PC-9 (cell line): ENCODE measurements at regions of chr1 and their contacts with region 1.

Region 1: GRCh38 chr1:204711947-204712701 is 26.6 kb upstream of the LRRN2 start:
- DNase-seq: no peak
- H3K4me3 ChIP-seq: no peak overlapping the region
- H3K27ac ChIP-seq: no peak overlapping the region
- H3K4me1 ChIP-seq: peaks cover 9% of the 10 kb centered on the region
- H3K27me3 ChIP-seq: peaks cover 5% of the 10 kb centered on the region; the same call in 1 of the 2 replicates
- CTCF ChIP-seq: no peak

Region 2: DNA sequence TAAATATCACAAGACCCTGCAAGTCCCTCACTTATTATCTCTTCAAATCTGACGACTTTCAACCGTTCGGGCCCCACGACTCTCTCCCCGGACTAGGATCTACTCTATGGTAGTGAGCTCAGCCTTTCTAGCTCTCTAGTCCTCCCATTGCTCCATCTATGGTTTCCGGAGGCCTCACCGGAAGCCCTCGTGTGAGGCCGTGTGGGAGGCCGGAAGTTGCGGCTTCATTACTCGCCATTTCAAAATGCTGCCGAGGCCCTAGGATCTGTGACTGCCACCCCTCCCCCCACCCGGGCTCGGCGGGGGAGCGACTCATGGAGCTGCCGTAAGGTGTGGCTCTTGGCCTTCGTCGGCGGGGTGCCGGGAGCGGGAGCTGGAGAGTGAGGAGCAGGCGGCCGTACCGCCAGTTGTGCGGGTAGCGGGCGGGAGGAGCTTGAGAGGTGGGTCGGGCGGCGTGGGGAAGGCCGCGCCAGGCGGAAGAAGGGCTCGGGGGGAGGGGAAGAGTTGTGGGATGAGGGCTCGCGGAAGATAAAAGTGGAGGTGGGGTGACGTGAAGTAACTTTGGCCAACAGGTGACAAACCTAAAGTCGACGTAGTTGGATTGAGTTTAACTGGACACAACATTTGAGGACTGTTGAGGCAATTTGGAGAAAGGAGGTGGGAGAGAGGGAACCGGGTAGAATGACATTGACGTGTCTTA is 195.8 kb before region 1 on chr1 and contains the start of gene MDM4:
- CTCF ChIA-PET with region 1: no interaction called
- POLR2A ChIA-PET with region 1: interaction called, 11 read pairs
- intact Hi-C with region 1: no loop called
- DNase-seq: peak; percentile 90 to 93
- H3K4me3 ChIP-seq: peak within 1 kb of the TSS; percentile 70
- H3K27ac ChIP-seq: peak within 1 kb of the TSS; percentile 94
- H3K4me1 ChIP-seq: peaks cover 11% of the 10 kb centered on the region
- H3K27me3 ChIP-seq: no peaks in the 10 kb centered on the region
- CTCF ChIP-seq: no peak
- total RNA-seq, gene MDM4: 69.2 and 82.6 TPM in 2 replicates

Region 3: GRCh38 chr1:204868340-204868700 is 156.2 kb after region 1 on chr1:
- CTCF ChIA-PET with region 1: no interaction called
- POLR2A ChIA-PET with region 1: no interaction called
- intact Hi-C with region 1: no loop called
- DNase-seq: no peak
- H3K4me3 ChIP-seq: no peak overlapping the region
- H3K27ac ChIP-seq: no peak overlapping the region
- H3K4me1 ChIP-seq: no peaks in the 10 kb centered on the region
- H3K27me3 ChIP-seq: peaks cover 94% of the 10 kb centered on the region
- CTCF ChIP-seq: no peak